ENCODE measurements at regions of chr6 and their contacts with region 1.

Region 1: GRCh38 chr6:44338228-44339122 is 4.0 kb upstream of the SPATS1 start:
- H3K4me3 Mint-ChIP-seq: no peak overlapping the region
- H3K27ac Mint-ChIP-seq: no peak overlapping the region
- H3K4me1 Mint-ChIP-seq: peaks cover 36% of the 10 kb centered on the region
- H3K27me3 Mint-ChIP-seq: peaks cover 19% of the 10 kb centered on the region

Region 2: GRCh38 chr6:44096612-44097011 is 241.9 kb before region 1 on chr6:
- intact Hi-C with region 1: loop called (anchors 1 kb)
- H3K4me3 Mint-ChIP-seq: no peak overlapping the region
- H3K27ac Mint-ChIP-seq: no peak overlapping the region
- H3K4me1 Mint-ChIP-seq: no peaks in the 10 kb centered on the region
- H3K27me3 Mint-ChIP-seq: no peaks in the 10 kb centered on the region

Region 3: DNA sequence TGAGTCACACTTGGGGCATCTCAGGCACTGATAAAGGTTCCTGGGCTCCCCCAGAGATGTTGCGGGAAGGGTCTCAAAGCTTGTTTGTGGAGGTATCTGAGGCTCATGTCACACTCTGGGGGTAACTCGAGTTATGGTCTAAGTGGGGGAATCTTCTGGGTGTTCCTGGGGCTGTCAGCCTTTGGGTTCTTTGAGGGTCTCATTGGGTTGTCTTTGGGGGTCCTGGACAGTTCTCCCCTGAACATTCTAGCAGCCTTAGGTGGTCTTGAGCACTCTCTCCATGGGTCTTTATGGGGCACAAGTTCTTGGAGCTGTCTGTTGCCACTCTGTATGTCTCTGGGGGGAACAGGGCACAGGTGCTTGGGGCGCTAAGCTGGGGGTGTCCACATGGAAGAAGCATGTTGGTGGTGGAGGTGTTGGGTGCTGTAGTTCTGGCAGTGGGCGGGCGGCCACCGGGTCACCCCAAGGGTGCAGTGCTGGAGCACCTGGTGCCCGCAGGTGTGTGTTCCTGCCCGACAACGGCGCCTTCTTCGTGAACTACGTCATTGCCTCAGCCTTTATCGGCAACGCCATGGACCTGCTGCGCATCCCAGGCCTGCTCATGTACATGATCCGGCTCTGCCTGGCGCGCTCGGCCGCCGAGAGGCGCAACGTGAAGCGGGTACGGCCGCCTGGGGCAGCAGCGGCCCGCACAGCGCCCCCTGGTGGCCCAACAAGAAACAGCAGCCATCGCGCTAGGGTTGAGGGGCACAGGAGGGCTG is 186.9 kb before region 1 on chr6:
- intact Hi-C with region 1: loop called (anchors 5 kb)
- H3K4me3 Mint-ChIP-seq: no peak overlapping the region
- H3K27ac Mint-ChIP-seq: no peak overlapping the region
- H3K4me1 Mint-ChIP-seq: peaks cover 14% of the 10 kb centered on the region
- H3K27me3 Mint-ChIP-seq: no peaks in the 10 kb centered on the region

Region 4: DNA sequence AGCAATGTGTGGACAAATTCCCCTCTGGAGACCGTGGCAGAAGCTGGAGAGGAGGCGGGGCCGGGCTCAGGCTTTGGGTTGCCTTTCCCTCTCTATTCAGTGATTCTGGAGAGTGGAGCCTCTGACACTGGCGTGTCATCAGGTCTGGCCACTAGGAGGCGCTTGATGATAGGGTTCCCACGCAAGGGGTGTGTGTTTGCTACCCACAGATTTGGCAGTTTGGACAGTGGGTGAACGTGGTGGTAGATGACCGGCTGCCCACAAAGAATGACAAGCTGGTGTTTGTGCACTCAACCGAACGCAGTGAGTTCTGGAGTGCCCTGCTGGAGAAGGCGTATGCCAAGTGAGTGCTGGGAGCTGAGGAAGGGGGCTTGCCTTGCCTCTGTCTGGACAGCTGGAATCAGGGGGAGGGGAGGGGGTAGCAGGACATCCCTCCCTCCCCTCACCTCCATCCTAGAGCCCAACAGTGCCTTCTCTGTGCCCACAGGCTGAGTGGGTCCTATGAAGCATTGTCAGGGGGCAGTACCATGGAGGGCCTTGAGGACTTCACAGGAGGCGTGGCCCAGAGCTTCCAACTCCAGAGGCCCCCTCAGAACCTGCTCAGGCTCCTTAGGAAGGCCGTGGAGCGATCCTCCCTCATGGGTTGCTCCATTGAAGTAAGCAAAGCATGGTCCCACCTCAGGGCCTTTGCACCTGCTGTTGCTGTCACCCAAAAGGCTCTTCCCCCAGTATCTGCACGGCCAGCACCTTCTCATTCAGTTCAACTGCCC is 165.6 kb before region 1 on chr6:
- intact Hi-C with region 1: loop called (anchors 1 kb)
- H3K4me3 Mint-ChIP-seq: no peak overlapping the region
- H3K27ac Mint-ChIP-seq: no peak overlapping the region
- H3K4me1 Mint-ChIP-seq: peaks cover 28% of the 10 kb centered on the region
- H3K27me3 Mint-ChIP-seq: peaks cover 26% of the 10 kb centered on the region

Region 5: DNA sequence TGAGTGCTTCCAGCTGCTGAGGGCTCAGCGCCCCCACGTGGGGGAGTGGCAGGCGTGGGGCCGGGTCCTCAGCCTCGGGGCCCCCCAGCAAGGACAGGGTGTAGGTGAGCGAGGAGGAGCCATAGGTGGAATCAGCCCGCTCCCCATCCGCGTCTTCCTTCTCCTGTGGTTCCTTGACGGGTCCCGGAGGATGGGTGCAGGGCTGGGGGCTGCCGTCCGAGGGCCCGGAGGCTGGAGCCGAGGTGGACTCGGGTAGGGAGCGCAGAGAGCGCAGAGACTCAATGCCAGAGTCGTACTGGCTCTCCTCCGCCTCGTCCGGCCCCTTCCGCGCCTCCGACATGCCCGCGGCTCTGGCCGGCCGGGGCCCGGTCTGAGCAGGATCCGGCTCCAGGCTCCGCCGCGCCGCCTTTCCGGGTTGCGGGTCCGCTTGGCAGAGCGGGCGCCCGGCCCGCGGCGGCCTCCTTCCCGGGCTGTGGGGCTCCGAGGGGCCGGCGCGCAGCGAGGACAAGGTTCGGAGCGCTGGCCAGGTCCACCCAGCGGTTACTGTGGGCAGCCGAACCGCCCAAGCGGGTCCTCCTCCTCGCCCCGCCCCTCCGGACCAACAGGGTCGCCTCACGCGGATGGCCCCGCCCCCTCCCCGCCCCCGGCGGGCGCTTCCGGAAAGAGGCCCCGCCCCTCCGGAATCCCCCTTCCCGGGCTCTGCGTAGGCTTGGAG is 73.3 kb before region 1 on chr6 and contains the start of gene NFKBIE:
- intact Hi-C with region 1: loop called (anchors 1 kb)
- H3K4me3 Mint-ChIP-seq: peak within 1 kb of the TSS; percentile 97
- H3K27ac Mint-ChIP-seq: peak within 1 kb of the TSS; percentile 90
- H3K4me1 Mint-ChIP-seq: peaks cover 60% of the 10 kb centered on the region
- H3K27me3 Mint-ChIP-seq: peaks cover 24% of the 10 kb centered on the region

Region 6: GRCh38 chr6:44312901-44313788 is 25.3 kb before region 1 on chr6 and contains the start of gene AARS2:
- intact Hi-C with region 1: no loop called
- H3K4me3 Mint-ChIP-seq: peak within 1 kb of the TSS; percentile 99
- H3K27ac Mint-ChIP-seq: peak within 1 kb of the TSS; percentile 100
- H3K4me1 Mint-ChIP-seq: peaks cover 31% of the 10 kb centered on the region
- H3K27me3 Mint-ChIP-seq: peaks cover 10% of the 10 kb centered on the region

Region 7: DNA sequence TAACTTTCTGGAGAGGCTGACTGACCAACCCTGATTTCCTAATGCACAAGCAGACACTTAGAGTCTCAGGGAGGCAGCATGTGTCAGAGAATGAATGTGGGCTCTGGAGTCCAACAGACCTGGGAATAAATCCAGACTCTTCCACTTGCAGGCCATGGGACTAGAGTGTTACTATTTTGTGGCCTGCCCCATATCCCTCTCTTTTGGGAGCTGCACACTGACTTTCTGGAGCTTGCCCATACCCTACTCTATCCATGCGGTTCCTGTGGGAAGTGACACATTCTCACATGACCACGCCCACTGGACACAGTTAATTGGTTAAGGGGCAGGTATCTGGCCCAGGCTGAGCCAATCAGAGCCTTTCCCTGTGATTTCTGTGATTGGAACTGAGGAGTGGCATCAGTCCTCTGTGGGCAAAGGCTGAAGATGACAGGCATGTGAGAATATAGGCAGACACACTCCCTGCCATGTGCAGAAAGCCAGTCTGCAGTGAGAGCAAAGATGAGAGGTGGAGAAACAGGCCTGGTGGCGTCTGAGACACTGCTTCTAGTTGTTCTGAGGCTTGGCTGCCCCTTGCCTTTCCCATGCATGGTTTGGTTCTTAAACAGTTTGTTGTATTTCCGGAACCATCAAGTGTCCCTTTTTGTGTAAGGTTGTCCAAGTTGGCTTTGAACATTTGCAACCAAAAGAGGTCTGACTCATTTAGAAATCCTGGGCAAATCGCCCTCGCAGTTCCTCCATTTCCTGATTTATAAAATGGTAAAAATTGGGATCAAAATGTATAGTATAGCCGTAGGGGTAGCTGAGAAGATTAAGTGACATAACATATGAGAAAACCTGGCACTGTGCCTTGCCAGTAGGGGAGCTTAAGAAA is 174.6 kb after region 1 on chr6:
- intact Hi-C with region 1: no loop called
- H3K4me3 Mint-ChIP-seq: no peak overlapping the region
- H3K27ac Mint-ChIP-seq: no peak overlapping the region
- H3K4me1 Mint-ChIP-seq: peaks cover 5% of the 10 kb centered on the region
- H3K27me3 Mint-ChIP-seq: peaks cover 24% of the 10 kb centered on the region